Astrocyte of the cerebellum (primary cell): ENCODE measurements at regions of chr16 and their contacts with region 1.

Region 1: DNA sequence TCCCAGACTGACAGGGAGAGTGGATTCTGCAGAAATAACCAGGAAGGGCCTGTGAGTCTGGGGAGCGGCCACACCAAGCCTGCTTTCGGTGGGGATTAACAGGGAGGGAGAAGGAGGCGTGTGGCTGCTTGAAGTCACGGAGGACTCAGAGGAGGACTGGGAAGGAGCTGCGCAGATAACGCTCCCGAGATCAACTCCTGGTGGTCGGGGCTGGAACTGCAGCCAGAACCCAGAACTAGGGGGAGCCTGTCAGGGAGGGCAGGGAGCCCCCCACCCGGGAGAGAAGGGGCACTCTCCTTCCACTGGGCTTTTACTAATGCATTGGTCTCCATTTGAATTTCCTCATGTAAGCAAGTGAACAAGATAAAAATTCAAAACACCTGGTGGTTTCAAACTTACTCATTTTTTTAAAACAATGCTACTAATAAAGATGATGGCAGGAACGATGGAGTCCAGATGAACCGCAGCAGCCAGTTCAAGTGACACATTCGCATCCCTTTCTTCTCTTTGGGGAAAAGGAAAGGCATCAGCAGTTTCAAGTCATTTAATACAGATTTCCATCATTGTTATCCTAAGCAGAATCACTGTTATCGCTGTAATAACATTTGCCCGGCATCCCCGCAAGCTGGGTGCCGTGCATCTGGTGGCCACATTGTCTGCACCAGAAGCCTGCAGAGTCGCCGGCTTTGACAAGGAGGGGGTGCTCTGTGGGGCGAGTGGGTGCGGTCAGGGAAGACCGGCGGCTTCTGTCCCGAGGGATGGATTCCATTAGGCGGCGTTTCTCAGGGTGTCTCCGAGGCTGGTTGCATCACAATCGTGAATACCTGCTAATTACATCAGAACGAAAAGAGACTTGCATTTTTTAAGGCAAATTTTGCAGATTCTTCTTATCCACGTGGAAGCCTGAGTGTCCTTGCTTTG is 183.0 kb downstream of the FOXL1 start:
- DNase-seq: no peak
- H3K4me3 ChIP-seq: no peak overlapping the region
- CTCF ChIP-seq: peak; percentile 95

Region 2: GRCh38 chr16:86707171-86707570 is 54.2 kb before region 1 on chr16:
- in situ Hi-C with region 1: no loop called
- DNase-seq: no peak
- H3K4me3 ChIP-seq: no peak overlapping the region
- CTCF ChIP-seq: no peak

Region 3: DNA sequence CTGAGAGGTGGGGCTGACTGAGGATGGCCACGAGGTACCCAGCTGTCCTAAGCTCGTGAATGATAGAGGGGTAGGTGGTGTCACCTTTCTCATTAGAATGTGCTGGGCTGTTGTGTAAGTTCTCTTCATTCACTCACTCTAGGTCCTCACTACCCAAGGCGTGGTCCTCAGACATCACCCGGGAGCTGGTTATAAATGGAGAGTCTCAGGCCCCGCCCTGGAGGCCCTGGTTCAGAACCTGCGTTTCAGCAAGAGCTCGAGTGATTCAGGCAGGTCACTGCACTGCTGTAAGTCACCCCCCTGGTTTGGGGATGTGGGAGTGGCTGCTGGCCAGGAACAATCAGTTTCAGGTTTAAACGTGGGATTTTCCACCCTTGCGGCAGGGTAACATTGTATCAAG is 43.3 kb before region 1 on chr16:
- in situ Hi-C with region 1: loop called (anchors 5 kb)
- DNase-seq: no peak
- H3K4me3 ChIP-seq: no peak overlapping the region
- CTCF ChIP-seq: no peak

Region 4: GRCh38 chr16:87252269-87252970 is 491.0 kb after region 1 on chr16:
- in situ Hi-C with region 1: no loop called
- DNase-seq: no peak
- H3K4me3 ChIP-seq: no peak overlapping the region
- CTCF ChIP-seq: no peak